A673 (cell line): ENCODE measurements at regions of chr3 and their contacts with region 1.

Region 1: GRCh38 chr3:89107461-89108290 is at the start of gene EPHA3:
- DNase-seq: peak; percentile 96
- H3K4me3 ChIP-seq: peak within 1 kb of the TSS; percentile 59
- H3K27ac ChIP-seq: peak within 1 kb of the TSS; percentile 19
- H3K4me1 ChIP-seq: peaks cover 40% of the 10 kb centered on the region
- H3K27me3 ChIP-seq: no peaks in the 10 kb centered on the region
- CTCF ChIP-seq: no peak
- total RNA-seq, gene EPHA3: 21.5 and 25.7 TPM in 2 replicates

Region 2: DNA sequence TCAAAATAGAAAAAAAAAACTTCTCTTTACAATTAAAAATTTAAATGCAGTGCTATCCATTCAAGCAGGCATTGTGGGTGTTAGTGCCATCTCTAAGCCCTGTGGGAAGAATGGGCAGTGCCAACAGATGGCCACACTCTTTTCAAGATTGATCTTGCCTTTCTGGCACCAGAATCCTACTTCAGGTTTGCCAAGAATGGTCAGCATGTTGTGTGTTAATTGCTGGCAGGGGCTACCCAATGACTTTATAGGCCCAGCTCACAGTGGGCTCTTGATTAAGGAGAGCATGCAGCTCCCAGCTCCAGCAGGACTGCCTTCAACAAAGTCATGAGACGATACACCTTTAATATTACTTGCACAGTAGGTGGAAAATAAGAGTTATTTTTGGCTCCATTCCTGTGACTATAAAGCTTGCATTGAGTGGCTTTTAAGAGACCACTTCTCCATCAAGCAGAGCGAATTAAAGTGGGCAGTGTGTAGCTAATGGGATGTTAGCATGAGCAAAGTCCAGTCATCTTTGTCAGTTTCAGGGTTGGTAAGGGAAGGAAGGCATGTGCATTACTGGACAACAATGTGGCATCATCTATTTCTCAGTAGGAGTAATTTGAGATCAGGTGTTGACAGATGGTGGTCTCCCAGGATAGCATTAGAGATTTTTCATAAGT is 481.1 kb before region 1 on chr3:
- CTCF ChIA-PET with region 1: no interaction called
- POLR2A ChIA-PET with region 1: no interaction called
- intact Hi-C with region 1: no loop called
- DNase-seq: no peak
- H3K4me3 ChIP-seq: no peak overlapping the region
- H3K27ac ChIP-seq: no peak overlapping the region
- H3K4me1 ChIP-seq: no peaks in the 10 kb centered on the region
- H3K27me3 ChIP-seq: no peaks in the 10 kb centered on the region
- CTCF ChIP-seq: no peak

Region 3: GRCh38 chr3:88707837-88708236 is 399.8 kb before region 1 on chr3:
- CTCF ChIA-PET with region 1: no interaction called
- POLR2A ChIA-PET with region 1: no interaction called
- intact Hi-C with region 1: loop called (anchors 5 kb)
- DNase-seq: no peak
- H3K4me3 ChIP-seq: no peak overlapping the region
- H3K27ac ChIP-seq: no peak overlapping the region
- H3K4me1 ChIP-seq: peaks cover 23% of the 10 kb centered on the region
- H3K27me3 ChIP-seq: no peaks in the 10 kb centered on the region
- CTCF ChIP-seq: no peak

Region 4: DNA sequence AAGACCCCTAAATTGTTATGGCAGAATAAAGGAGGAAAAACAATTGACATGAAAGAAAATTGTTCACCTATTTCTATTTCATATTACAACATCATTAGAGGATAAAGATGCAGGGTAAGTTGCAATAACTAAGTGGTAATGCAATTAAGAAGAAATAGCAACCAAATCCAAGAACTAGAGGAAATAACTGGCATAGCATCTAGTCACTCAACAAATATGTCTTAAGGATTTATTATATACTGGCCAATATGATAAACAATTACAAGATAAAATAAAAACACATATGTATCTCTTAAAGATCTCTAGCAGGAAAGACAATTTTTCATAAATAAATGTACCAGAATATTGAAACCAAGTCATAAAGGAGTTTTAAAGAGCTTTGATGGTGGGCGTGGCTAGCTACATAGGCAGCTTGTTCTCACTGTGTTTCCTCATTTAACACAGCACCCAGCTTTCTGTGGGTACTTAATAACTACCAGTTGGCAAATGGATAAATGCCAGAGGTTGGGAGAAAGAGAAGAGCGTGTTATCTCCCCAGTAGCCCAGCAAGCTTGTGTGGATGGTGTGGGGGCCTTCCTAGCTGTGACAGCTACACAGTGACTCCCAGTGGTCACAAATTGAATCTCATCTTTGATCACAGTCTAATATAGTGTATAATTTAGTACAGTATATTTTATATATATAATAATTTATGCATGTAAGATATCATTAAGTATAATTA is 983.7 kb after region 1 on chr3:
- CTCF ChIA-PET with region 1: no interaction called
- POLR2A ChIA-PET with region 1: no interaction called
- intact Hi-C with region 1: loop called (anchors 5 kb)
- DNase-seq: peak; percentile 89
- H3K4me3 ChIP-seq: no peak overlapping the region
- H3K27ac ChIP-seq: no peak overlapping the region
- H3K4me1 ChIP-seq: peaks cover 21% of the 10 kb centered on the region
- H3K27me3 ChIP-seq: no peaks in the 10 kb centered on the region
- CTCF ChIP-seq: peak; percentile 71